Activated CD4-positive, alpha-beta T cell treated with anti-CD3 and anti-CD28 coated beads, Interleukin-2, amount 10 ng/mL, durations not matched to agents 24 days and 14 days (primary cell): ENCODE measurements at regions of chr10 and their contacts with region 1.

Region 1: DNA sequence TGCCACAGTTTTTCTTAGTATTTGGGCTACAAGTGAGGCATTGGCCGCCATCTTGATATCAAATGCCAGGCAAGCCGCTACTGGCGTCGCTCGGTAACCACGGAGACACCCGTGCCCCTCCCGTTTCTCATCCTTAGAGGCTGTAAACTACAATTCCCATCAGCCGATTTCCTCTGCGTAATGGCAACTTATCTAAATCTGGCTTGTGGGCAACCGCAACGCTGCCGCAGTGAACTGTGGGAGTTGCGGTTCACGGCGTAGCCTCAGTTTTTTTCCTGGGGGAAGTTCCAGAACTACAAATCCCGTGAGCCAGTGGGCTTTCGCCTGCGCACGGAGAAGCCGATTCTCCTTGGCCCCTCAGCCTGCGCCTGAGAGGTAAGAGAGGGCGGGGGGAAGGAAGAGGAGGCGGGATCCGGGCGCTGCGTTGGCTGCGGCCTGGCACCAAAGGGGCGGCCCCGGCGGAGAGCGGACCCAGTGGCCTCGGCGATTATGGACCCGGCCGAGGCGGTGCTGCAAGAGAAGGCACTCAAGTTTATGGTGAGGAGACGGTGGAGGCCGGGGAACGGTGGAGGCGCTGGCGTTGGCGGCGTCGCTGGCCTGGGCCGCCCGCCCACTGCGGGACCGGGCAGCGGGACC is at the start of gene BTRC:
- DNase-seq: peak; percentile 99
- H3K4me3 Mint-ChIP-seq: peak within 1 kb of the TSS; percentile 90
- H3K27ac Mint-ChIP-seq: peak within 1 kb of the TSS; percentile 98
- H3K4me1 Mint-ChIP-seq: peaks cover 24% of the 10 kb centered on the region
- H3K27me3 Mint-ChIP-seq: peaks cover 19% of the 10 kb centered on the region
- total RNA-seq, gene BTRC: 16.2 and 19.0 TPM in 2 replicates

Region 2: DNA sequence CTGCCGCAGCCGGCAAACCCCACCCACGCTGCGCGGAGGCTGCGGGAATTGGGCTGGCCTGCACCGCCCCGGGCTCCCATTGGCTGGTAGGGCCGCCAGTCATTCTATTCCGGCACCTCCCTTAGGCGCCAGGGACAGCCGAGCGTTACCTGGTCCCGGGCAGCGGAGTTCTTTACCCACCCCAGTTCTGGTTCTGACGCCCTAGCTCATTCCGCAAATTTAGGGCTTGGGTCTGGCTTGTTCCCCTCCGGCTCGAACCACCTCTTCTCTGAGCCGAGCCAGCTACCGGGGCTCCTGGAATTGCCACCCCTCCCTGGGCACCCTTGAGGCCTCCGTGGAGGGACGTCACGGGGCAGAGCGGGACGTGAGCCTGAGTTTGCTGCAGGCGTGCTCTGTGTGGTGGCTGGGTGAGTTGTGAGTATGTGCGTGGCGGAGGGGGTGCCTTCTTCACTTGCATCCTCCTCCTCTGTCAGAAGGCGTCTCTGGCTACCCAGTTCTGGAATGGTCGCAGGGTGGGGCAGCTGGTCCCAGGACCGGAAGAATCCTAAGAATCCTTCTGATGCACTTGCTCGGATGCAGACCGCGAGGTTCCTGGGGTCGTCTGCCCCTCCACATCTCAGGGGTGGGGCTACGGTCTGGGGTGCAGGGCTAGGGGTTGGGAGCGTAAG is 322.5 kb before region 1 on chr10 and contains the starts of genes PDZD7 and SFXN3:
- intact Hi-C with region 1: loop called (anchors 5 kb)
- DNase-seq: peak; percentile 99
- H3K4me3 Mint-ChIP-seq: peak within 1 kb of the TSS; percentile 91
- H3K27ac Mint-ChIP-seq: peak within 1 kb of the TSS; percentile 91
- H3K4me1 Mint-ChIP-seq: peaks cover 26% of the 10 kb centered on the region
- H3K27me3 Mint-ChIP-seq: peaks cover 24% of the 10 kb centered on the region
- total RNA-seq, gene PDZD7: 0.38 and 0.93 TPM in 2 replicates
- total RNA-seq, gene SFXN3: 36.0 and 37.3 TPM in 2 replicates

Region 3: DNA sequence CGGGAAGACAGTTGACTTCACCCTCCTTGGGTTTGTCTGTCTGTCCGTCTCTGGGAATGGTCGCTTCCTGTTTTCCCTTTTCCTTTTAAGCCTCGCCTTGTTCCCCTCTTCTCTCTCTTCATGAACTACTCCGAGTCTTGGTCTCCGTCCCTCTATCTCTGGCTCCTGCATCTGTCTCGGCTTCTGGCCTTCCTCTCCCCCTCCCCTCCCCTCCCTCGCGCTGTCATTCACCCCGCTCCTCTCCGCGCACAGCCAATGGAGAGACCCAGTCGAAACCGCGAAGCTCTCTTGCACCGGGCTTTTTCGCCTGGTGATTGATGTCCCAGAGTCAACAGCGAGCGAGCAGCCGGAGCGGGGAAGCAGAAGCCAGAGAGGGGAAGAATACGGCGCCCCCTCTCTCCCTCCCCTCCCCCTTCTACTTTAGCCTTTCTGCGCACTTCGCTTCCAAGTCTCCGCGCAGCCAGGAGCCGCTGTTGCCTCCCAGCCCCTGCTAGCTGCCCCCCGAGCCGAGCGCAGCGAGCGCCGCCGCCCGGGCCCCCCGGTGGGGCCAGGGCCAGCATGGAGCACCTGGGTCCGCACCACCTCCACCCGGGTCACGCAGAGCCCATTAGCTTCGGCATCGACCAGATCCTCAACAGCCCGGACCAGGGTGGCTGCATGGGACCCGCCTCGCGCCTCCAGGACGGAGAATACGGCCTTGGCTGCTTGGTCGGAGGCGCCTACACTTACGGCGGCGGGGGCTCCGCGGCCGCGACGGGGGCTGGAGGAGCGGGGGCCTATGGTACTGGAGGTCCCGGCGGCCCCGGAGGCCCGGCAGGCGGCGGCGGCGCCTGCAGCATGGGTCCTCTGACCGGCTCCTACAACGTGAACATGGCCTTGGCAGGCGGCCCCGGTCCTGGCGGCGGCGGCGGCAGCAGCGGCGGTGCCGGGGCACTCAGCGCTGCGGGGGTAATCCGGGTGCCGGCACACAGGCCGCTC is 222.5 kb before region 1 on chr10 and contains the start of gene TLX1:
- intact Hi-C with region 1: no loop called
- DNase-seq: peak; percentile 59
- H3K4me3 Mint-ChIP-seq: no peak within 1 kb of the TSS
- H3K27ac Mint-ChIP-seq: no peak within 1 kb of the TSS
- H3K4me1 Mint-ChIP-seq: peaks cover 13% of the 10 kb centered on the region
- H3K27me3 Mint-ChIP-seq: peaks cover 85% of the 10 kb centered on the region
- total RNA-seq, gene TLX1: not detected in 2 replicates

Region 4: GRCh38 chr10:101380353-101381017 is 26.7 kb after region 1 on chr10:
- intact Hi-C with region 1: loop called (anchors 1 kb)
- DNase-seq: no peak
- H3K4me3 Mint-ChIP-seq: no peak overlapping the region
- H3K27ac Mint-ChIP-seq: peak overlapping the region; percentile 34
- H3K4me1 Mint-ChIP-seq: peaks cover 11% of the 10 kb centered on the region
- H3K27me3 Mint-ChIP-seq: no peaks in the 10 kb centered on the region

Region 5: GRCh38 chr10:101693978-101694673 is 340.3 kb after region 1 on chr10:
- intact Hi-C with region 1: loop called (anchors 10 kb)
- DNase-seq: peak; percentile 93
- H3K4me3 Mint-ChIP-seq: peak overlapping the region; percentile 98
- H3K27ac Mint-ChIP-seq: peak overlapping the region; percentile 99
- H3K4me1 Mint-ChIP-seq: peaks cover 24% of the 10 kb centered on the region
- H3K27me3 Mint-ChIP-seq: no peaks in the 10 kb centered on the region

Region 6: DNA sequence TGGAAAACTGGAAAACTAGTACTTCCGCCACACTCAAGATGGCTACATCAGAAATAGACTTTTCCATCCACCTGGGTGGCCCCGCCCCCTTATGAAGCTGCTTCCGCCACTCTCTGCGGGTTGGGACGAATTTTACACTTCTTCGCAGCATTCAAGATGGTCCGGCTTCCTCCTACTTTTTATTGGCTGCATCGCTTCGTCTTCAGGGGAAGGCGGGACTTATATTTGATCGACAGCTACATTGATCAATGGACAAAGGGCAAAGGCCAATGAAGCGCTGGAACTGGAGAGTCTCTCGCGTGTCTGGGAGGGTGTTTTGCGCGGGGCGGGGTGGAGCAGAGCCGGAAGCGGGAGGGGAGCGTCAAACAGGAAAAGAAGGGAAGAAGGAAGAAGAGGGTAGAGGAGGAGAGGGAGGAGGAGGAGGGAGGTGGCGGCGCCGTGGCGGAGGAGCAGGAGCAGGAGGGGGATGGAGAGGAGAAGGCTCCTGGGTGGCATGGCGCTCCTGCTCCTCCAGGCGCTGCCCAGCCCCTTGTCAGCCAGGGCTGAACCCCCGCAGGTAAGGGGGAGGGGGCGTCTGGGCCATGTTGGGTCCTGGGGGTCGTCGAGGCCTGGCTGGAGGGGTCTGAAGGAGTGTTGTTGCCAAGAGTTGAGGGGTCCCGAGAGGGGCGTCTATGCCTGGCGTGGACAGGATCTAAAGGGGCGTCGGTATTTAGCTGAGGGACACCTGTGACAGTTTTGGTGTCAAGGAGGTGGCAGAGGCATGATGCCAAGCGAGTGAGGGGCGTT is 1390.0 kb after region 1 on chr10 and contains the start of gene WBP1L:
- intact Hi-C with region 1: loop called (anchors 5 kb)
- DNase-seq: peak; percentile 98
- H3K4me3 Mint-ChIP-seq: peak within 1 kb of the TSS; percentile 83
- H3K27ac Mint-ChIP-seq: peak within 1 kb of the TSS; percentile 81
- H3K4me1 Mint-ChIP-seq: peaks cover 38% of the 10 kb centered on the region
- H3K27me3 Mint-ChIP-seq: no peaks in the 10 kb centered on the region
- total RNA-seq, gene WBP1L: 15.6 and 15.8 TPM in 2 replicates

Region 7: GRCh38 chr10:102988404-102989314 is 1634.8 kb after region 1 on chr10:
- intact Hi-C with region 1: no loop called
- DNase-seq: no peak
- H3K4me3 Mint-ChIP-seq: no peak overlapping the region
- H3K27ac Mint-ChIP-seq: no peak overlapping the region
- H3K4me1 Mint-ChIP-seq: no peaks in the 10 kb centered on the region
- H3K27me3 Mint-ChIP-seq: no peaks in the 10 kb centered on the region